ENCODE measurements at regions of chr11 and their contacts with region 1.

Region 1: DNA sequence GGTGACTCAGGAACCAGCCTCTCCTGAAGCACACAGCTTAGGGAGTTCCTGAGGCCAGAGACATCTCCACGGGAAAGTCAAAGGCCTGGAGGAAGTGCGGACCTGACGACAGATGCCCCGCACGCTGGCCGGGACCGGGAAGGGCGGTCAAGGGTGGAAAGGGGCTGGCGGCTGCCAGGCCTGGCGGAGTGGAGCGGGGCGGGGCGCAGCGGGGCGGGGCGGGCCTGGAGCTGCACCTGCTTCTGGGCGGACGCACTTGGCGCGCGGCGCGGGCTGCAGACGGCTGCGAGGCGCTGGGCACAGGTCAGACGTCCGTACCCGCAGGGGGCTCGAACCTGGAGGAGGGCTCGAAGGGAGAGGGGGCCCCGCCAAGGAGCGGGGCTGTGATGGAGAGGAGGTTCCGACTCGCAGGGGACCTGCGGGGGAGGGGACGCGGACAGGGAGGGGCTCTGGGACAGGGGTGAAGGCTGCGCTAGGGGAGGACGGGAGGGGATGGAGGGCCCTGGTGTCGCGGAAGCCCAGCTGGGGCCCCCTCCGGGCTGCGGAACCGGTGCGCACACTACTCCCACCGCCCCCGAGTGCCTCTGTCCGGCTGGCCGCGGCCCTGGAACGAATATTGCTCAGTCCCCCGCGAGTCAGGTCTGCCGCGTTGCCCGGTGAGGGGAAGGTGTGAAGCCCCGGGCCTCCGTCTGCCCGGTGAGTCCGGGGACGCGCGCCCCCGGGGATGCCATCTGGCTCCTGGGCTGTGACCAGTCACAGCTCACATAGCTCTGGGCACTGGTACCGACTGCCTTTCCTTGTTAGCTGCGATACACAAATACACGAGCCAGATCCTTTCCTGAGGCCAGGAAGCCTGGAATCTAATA is at the start of gene TMEM45B:
- DNase-seq: peak; percentile 39
- H3K4me3 Mint-ChIP-seq: peak within 1 kb of the TSS; percentile 79
- H3K27ac Mint-ChIP-seq: peak within 1 kb of the TSS; percentile 78
- H3K4me1 Mint-ChIP-seq: peaks cover 52% of the 10 kb centered on the region
- H3K27me3 Mint-ChIP-seq: peaks cover 2% of the 10 kb centered on the region
- total RNA-seq, gene TMEM45B: 3.8 to 3.9 TPM

Region 2: DNA sequence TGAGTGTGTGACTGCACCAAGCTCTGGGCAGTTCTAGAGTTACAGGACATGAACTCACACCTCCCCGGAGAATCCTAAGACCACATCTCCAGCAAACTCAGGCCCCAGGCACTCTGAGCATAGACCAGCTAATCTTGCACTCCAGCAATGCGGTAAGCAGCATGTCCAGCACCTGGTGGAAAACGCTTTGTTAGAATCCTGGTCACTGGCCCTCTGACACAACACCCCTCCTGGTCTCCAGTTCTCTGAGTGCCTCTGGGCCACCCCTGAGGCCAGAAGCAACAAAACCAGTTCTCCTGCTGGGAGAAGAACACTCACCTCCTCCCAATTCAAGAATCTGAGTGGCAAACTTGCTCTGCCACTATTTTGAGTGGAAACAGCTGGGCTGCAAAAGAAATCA is 82.9 kb before region 1 on chr11:
- CTCF ChIA-PET with region 1: no interaction called
- intact Hi-C with region 1: no loop called
- DNase-seq: no peak
- H3K4me3 Mint-ChIP-seq: no peak overlapping the region
- H3K27ac Mint-ChIP-seq: no peak overlapping the region
- H3K4me1 Mint-ChIP-seq: no peaks in the 10 kb centered on the region
- H3K27me3 Mint-ChIP-seq: no peaks in the 10 kb centered on the region

Region 3: GRCh38 chr11:129743111-129743815 is 72.6 kb before region 1 on chr11:
- CTCF ChIA-PET with region 1: no interaction called
- intact Hi-C with region 1: no loop called
- DNase-seq: no peak
- H3K4me3 Mint-ChIP-seq: no peak overlapping the region
- H3K27ac Mint-ChIP-seq: no peak overlapping the region
- H3K4me1 Mint-ChIP-seq: no peaks in the 10 kb centered on the region
- H3K27me3 Mint-ChIP-seq: no peaks in the 10 kb centered on the region

Region 4: DNA sequence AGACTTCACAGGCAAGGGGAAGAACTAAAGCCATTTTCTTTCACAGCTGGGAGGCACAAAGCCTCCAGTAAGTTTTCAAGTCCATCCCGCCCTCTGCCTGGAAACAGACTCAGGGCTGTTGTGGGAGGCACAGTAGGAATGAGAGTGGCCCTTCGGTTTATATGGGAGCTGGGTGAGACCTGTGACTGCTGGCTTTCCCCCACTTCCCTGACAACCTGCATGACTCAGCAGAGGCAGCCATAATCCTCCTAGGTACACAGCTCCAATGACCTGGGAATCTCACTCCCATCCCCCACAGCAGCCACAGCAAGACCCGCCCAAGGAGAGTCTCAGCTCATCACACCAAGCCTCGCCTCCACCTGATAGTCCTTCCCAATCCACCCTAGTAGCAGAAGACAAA is 12.3 kb before region 1 on chr11:
- CTCF ChIA-PET with region 1: interaction called, 6 read pairs
- intact Hi-C with region 1: loop called (anchors 1 kb)
- DNase-seq: no peak
- H3K4me3 Mint-ChIP-seq: peak overlapping the region; percentile 1
- H3K27ac Mint-ChIP-seq: peak overlapping the region; percentile 30
- H3K4me1 Mint-ChIP-seq: peaks cover 70% of the 10 kb centered on the region
- H3K27me3 Mint-ChIP-seq: no peaks in the 10 kb centered on the region

Region 5: DNA sequence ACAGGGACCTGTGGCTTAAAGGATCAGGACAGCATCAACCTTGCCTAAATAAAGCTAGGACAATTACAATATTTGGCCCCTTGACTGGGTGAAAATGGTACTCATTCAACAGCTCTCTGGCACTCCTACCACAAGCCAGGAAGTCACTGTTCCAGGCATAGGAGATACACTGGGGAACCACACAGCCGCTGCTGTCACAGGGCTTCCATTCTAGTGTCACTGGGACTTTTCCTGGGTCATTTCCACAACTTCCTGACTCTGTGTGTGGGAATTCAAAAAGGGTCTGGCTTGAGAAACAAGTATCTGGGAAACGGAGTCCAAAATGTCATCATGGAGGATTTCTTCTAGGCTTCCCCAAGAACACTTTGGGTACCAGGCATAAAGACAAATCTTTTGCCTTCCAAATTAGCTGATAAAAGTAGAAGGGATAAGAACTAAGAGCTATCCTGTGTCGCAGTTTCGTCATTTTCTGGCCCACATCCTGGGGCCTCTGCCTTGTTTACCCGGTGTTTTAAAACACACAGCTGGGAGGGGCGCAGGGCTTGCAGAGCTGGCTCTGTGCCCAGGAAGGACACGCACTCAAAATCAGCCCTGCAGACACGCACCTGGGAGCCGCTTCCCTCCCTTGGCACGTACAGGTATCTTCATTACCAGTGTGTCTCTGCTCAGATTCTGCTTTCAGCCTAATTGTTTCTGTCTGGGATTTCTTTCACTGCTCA is 37.8 kb after region 1 on chr11:
- CTCF ChIA-PET with region 1: interaction called, 4 read pairs
- intact Hi-C with region 1: loop called (anchors 1 kb)
- DNase-seq: peak; percentile 84
- H3K4me3 Mint-ChIP-seq: no peak overlapping the region
- H3K27ac Mint-ChIP-seq: peak overlapping the region; percentile 86
- H3K4me1 Mint-ChIP-seq: peaks cover 38% of the 10 kb centered on the region
- H3K27me3 Mint-ChIP-seq: no peaks in the 10 kb centered on the region

Measured in activated naive CD4-positive, alpha-beta T cell treated with anti-CD3 and anti-CD28 coated beads for 36 hours (primary cell).